Calu3 (cell line): ENCODE measurements at regions of chr2 and their contacts with region 1.

Region 1: DNA sequence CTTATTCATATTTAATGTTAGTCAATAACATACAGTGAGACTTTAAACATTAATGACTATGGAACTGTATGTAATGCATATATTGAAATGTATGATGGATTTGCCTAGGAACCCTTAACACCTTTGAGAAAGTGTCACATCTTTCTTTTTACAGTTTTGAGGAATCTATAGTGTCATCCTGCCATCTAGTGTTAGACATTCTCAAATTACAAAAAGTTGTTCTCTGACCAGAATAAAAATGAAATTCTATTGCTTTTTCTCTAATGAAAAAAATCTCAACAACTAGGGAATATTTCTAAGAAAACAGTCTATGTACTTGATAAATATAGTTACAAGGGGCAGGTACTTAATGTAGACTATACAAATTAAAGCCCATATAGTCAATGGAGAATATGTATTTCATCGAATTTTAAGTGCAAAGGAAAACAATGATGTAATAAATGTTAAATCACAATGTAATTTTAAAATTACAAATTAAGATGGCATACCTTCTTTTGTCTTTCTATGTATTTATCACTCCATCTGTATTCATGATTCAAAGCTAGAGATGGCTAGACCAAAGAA is 5.1 kb upstream of the CALCRL start:
- DNase-seq: no peak
- H3K4me3 Mint-ChIP-seq: no peak overlapping the region
- H3K27ac Mint-ChIP-seq: no peak overlapping the region
- H3K4me1 Mint-ChIP-seq: peaks cover 6% of the 10 kb centered on the region
- H3K27me3 Mint-ChIP-seq: no peaks in the 10 kb centered on the region
- CTCF ChIP-seq: peak; percentile 47

Region 2: DNA sequence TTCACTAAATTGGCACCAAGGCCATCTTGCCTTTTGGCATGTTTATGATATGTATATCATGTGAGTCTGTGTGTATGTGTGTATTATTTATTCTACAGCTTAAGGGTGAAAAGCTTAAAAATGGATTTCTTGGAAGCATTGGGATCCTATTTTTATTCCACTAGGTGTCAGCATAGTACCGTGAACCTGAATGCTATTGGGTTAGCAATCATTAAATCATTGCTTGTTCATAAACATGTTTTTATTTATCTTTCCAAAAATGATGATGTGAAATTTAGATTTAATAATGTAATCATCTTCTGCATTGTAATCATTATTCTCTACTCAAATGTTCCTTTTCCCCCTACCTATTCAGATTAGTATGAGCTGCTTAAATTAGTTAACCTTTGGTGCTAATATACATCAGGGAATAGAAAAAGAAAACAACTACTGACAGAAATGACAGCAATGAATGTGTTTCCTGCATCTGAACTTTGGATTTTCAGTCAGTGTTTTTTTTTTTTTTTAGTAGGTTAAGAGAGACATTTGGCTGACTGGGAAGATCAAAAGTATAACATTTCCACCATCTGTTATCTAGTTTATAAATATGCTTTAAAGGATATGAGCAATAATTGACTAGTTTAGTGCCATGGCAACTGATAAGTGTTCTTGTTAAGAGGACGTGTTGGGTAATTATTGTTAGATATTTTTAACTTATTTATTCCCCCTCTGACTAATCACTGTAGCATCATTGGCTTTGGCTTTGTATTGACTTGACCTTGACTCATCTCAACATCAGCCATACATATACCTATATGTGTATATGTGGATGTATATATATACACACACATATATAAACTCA is 590.1 kb before region 1 on chr2:
- CTCF ChIA-PET with region 1: interaction called, 18 read pairs
- intact Hi-C with region 1: loop called (anchors 1 kb)
- DNase-seq: no peak
- H3K4me3 Mint-ChIP-seq: no peak overlapping the region
- H3K27ac Mint-ChIP-seq: no peak overlapping the region
- H3K4me1 Mint-ChIP-seq: no peaks in the 10 kb centered on the region
- H3K27me3 Mint-ChIP-seq: no peaks in the 10 kb centered on the region
- CTCF ChIP-seq: peak; percentile 71

Region 3: DNA sequence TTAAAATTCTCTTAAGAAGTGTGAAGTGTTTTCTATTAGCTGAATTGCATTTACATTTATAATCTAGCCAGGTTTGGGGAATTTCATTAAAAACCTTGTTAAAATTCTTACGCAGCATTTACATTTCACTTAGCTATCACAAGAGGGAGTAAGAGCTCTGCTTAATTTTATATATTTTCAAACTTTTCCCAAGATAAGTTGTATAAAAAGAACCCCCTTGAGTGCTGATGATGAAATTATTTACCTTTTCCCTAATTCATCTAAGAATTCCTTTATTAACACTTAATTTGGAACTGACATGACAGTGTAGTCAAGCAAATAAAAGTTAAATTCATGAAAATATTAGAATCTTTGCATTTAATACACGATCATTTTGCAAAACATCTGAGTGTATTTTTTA is 549.9 kb before region 1 on chr2:
- CTCF ChIA-PET with region 1: interaction called, 8 read pairs
- intact Hi-C with region 1: loop called (anchors 1 kb)
- DNase-seq: no peak
- H3K4me3 Mint-ChIP-seq: no peak overlapping the region
- H3K27ac Mint-ChIP-seq: no peak overlapping the region
- H3K4me1 Mint-ChIP-seq: peaks cover 9% of the 10 kb centered on the region
- H3K27me3 Mint-ChIP-seq: no peaks in the 10 kb centered on the region
- CTCF ChIP-seq: peak; percentile 48

Region 4: GRCh38 chr2:186991766-186992417 is 461.3 kb before region 1 on chr2:
- CTCF ChIA-PET with region 1: no interaction called
- intact Hi-C with region 1: loop called (anchors 5 kb)
- DNase-seq: no peak
- H3K4me3 Mint-ChIP-seq: no peak overlapping the region
- H3K27ac Mint-ChIP-seq: no peak overlapping the region
- H3K4me1 Mint-ChIP-seq: no peaks in the 10 kb centered on the region
- H3K27me3 Mint-ChIP-seq: no peaks in the 10 kb centered on the region
- CTCF ChIP-seq: no peak

Region 5: GRCh38 chr2:187117483-187117882 is 335.7 kb before region 1 on chr2:
- CTCF ChIA-PET with region 1: no interaction called
- intact Hi-C with region 1: no loop called
- DNase-seq: no peak
- H3K4me3 Mint-ChIP-seq: no peak overlapping the region
- H3K27ac Mint-ChIP-seq: no peak overlapping the region
- H3K4me1 Mint-ChIP-seq: no peaks in the 10 kb centered on the region
- H3K27me3 Mint-ChIP-seq: no peaks in the 10 kb centered on the region
- CTCF ChIP-seq: no peak

Region 6: DNA sequence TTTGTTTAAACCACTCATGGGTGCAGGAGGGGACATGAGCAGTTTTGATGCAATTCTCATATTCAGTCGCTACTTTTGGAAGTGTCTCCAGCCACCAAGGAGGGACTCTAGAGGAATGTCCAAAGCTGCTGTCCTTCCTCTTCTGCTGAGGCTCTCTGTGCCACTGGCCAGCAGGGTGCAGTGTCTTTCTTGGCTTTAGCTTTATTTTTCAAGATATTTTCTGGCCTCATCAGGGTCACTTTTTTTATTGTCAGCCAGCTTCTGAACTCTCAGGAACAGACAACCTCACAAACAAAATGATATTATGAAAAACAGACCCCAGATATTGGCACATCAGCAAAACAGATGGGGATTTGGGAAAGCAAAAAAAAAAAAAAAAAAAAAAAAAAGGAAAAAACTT is 314.9 kb before region 1 on chr2:
- CTCF ChIA-PET with region 1: interaction called, 6 read pairs
- intact Hi-C with region 1: loop called (anchors 1 kb)
- DNase-seq: peak; percentile 49
- H3K4me3 Mint-ChIP-seq: no peak overlapping the region
- H3K27ac Mint-ChIP-seq: no peak overlapping the region
- H3K4me1 Mint-ChIP-seq: no peaks in the 10 kb centered on the region
- H3K27me3 Mint-ChIP-seq: no peaks in the 10 kb centered on the region
- CTCF ChIP-seq: peak; percentile 73

Region 7: DNA sequence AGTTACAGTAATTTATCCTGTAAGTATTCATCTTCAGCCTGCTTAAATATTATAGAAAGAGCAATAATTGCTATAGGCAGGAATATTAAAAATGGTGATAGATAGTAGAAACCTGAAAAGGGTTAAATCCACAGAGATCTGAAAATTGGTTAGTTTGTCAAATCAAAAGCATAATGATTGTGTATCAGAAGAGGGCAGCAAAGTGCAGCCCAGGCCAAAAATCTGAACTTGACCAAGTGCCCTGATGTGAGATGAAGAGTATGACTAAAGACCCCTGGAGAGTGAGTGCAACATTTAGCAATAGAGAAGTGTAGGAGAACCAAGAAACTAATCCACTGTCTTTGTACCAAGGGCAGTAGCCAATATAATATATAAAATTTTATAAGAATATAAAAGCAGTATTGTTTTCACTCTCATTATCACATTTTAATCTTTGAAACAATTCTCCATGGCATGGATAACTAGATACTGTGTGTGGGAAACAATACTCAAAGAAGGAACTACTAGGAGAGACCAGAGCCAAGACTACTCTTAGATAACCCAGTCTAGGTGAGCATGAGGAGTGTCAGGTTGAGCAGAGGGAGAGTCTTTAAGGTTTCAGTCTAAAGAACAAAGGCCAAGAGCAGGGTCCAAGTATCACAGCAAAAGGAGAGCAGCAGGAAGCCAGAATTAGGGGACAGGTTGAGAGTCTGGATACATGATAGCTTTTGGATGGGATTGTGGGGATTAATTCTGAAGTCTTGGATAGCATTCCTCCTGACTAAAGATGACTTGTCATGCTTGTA is 153.8 kb before region 1 on chr2:
- CTCF ChIA-PET with region 1: no interaction called
- intact Hi-C with region 1: loop called (anchors 1 kb)
- DNase-seq: peak; percentile 3
- H3K4me3 Mint-ChIP-seq: no peak overlapping the region
- H3K27ac Mint-ChIP-seq: no peak overlapping the region
- H3K4me1 Mint-ChIP-seq: no peaks in the 10 kb centered on the region
- H3K27me3 Mint-ChIP-seq: no peaks in the 10 kb centered on the region
- CTCF ChIP-seq: peak; percentile 23